Naive thymus-derived CD4-positive, alpha-beta T cell (primary cell): ENCODE measurements at regions of chr1 and their contacts with region 1.

Region 1: DNA sequence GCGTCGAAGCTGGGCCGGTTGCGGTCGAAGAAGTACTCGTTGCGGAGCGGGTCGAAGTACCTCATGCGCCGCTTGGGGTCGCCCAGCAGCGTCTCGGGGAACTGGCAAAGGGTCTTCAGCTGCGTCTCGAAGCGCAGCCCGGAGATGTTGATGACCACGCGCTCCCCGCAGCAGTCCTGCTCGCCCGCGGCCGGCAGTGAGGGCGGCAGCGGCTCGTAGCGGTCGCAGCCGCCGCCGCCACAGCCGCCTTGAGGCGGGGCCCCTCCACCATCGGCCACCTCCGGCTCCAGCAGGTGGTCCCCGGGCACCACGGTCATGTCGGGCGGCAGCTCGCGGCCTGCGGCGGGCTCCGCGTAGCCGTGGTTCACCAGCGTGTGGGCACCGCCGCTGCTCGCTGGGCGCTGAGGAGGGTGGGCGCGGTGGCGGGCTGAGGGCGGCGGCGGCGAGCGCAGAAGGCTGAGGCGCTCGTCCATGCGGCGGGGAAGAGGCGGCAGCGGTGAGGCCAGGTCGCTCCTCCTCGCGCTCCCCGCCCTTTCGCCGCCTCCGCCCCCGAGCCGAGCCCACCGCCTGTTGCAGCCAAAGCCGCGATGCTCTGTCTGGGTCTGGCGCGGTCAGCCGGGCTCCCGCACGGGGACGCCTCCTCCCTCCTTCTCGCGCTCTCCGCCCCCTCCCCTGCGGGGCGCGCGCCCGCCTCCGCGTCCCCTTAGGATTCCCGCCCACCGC is at the start of gene KCNA3:
- DNase-seq: peak; percentile 52 to 74 (median 63)
- ATAC-seq: peak; percentile 54
- H3K4me3 ChIP-seq: peak within 1 kb of the TSS; percentile 97
- H3K4me3 Mint-ChIP-seq: peak within 1 kb of the TSS; percentile 55 to 100 (median 99)
- H3K27ac ChIP-seq: peak within 1 kb of the TSS; percentile 88
- H3K27ac Mint-ChIP-seq: peak within 1 kb of the TSS; percentile 93 to 100 (median 100)
- H3K4me1 ChIP-seq: peaks cover 5% of the 10 kb centered on the region in 2 donors
- H3K4me1 Mint-ChIP-seq: peaks cover 27 to 60% (median 55%) of the 10 kb centered on the region in 7 donors
- H3K27me3 ChIP-seq: no peaks in the 10 kb centered on the region
- H3K27me3 Mint-ChIP-seq: peaks cover 0 to 2% (median 0%) of the 10 kb centered on the region in 5 donors
- total RNA-seq, gene KCNA3: 74.1 to 115 (median 108) TPM

Region 2: GRCh38 chr1:110460253-110461220 is 214.0 kb before region 1 on chr1:
- CTCF ChIA-PET with region 1: no interaction called
- POLR2A ChIA-PET with region 1: no interaction called
- intact Hi-C with region 1: no loop called
- DNase-seq: peak; percentile 66 to 91 (median 83)
- ATAC-seq: peak; percentile 96
- H3K4me3 ChIP-seq: no peak overlapping the region
- H3K4me3 Mint-ChIP-seq: no peak overlapping the region
- H3K27ac ChIP-seq: no peak overlapping the region
- H3K27ac Mint-ChIP-seq: no peak overlapping the region
- H3K4me1 ChIP-seq: no peaks in the 10 kb centered on the region
- H3K4me1 Mint-ChIP-seq: no peaks in the 10 kb centered on the region
- H3K27me3 ChIP-seq: no peaks in the 10 kb centered on the region
- H3K27me3 Mint-ChIP-seq: no peaks in the 10 kb centered on the region

Region 3: DNA sequence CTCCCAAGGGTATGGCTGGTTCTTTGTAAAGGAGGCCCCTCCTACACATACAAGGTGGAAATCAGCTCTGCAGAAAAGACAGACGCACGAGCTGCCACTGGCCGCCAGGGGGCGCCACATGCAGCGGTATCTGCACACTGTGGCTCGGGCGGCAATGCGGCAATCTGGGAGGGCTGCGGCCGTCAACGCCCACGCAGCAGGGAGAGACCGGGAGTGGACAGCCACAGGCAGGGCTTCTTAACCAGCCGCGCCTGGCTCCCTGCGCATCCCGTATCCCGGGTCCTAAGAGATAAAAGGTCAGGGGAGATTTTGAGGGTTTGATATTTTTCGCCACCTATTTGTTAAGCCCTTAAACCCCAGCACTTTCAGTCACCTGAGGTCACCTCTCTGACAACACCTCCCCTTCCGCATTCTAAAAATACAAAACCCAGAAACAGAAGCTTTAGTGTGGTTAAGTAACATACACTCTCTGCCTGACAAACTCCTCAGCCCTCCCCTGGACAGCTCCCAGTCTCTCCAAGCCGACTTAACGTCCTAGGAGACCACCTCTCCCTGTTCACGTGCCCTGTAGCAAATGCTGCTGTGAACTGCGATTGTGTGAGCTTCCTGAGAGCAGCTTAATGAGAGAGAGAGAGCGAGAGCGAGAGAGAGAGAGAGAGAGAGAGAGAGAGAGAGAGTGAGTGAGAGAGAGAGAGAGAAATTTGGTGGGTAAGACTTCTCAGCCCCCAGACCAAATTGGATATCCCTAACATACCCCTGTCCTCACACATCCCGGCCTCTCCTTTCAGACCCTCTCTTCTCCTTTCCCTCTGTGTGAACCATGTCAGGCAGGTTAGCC is 54.9 kb before region 1 on chr1:
- CTCF ChIA-PET with region 1: interaction called, 11 read pairs
- POLR2A ChIA-PET with region 1: interaction called, 29 read pairs
- intact Hi-C with region 1: loop called (anchors 1 kb)
- DNase-seq: peak; percentile 84 to 96 (median 92)
- ATAC-seq: peak; percentile 95
- H3K4me3 ChIP-seq: peak overlapping the region; percentile 58
- H3K4me3 Mint-ChIP-seq: peak overlapping the region; percentile 81 to 96 (median 90)
- H3K27ac ChIP-seq: peak overlapping the region; percentile 54
- H3K27ac Mint-ChIP-seq: peak overlapping the region; percentile 89 to 95 (median 93)
- H3K4me1 ChIP-seq: peaks cover 16 to 30% of the 10 kb centered on the region in 2 donors
- H3K4me1 Mint-ChIP-seq: peaks cover 32 to 54% (median 42%) of the 10 kb centered on the region in 7 donors
- H3K27me3 ChIP-seq: no peaks in the 10 kb centered on the region
- H3K27me3 Mint-ChIP-seq: peaks cover 0 to 4% (median 0%) of the 10 kb centered on the region in 5 donors

Region 4: DNA sequence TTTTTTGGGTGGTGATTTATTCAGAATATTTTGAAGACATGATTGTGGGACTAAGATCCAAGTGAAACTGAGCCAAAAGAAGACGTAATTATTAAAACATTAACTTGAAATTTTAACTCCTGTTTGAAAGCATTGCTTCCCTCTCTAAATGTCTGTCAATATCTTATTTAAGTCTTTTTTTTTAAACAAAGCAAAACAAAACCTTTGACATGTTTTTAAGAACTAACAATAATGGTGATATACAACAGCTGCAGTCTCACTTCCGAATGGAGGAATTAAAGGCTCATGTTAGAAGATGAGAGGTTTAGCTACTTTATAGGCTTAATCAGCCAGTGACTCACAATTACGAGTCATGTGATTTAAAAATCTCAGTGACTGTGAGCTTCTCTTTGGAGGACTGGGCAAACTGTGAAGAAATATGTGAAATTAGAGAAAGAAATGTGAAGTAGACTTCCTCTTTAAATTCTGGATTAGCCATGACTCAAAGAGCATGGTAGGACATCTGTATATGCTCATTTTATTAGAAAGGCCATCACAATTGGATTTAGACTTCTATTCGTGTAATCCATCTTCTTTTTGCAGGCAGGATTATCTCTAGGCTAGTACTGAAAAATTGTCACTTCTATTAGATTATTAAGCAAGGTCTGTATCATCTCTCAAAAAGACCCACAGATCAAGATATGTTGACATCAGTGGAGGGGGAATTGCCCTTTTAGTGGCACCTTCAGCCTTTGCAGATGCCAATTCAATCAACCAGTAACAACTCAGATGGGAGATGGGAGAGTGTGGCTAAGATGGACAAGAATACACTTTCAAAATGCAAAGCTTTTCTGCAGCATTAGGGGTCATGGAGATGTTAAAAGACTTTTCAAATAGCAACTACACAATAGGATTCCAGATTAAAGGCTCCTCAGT is 28.4 kb before region 1 on chr1:
- CTCF ChIA-PET with region 1: interaction called, 5 read pairs
- POLR2A ChIA-PET with region 1: interaction called, 108 read pairs
- intact Hi-C with region 1: loop called (anchors 1 kb)
- DNase-seq: no peak
- ATAC-seq: peak; percentile 60
- H3K4me3 ChIP-seq: peak overlapping the region; percentile 5
- H3K4me3 Mint-ChIP-seq: peak overlapping the region in 6 of 10 donors; percentile 22 to 55 (median 37)
- H3K27ac ChIP-seq: peak overlapping the region; percentile 48
- H3K27ac Mint-ChIP-seq: peak overlapping the region in 2 of 9 donors; percentile 75 to 87
- H3K4me1 ChIP-seq: peaks cover 83 to 92% of the 10 kb centered on the region in 2 donors
- H3K4me1 Mint-ChIP-seq: peaks cover 14 to 48% (median 42%) of the 10 kb centered on the region in 7 donors
- H3K27me3 ChIP-seq: no peaks in the 10 kb centered on the region
- H3K27me3 Mint-ChIP-seq: no peaks in the 10 kb centered on the region

Region 5: GRCh38 chr1:110686188-110686587 is 11.7 kb after region 1 on chr1:
- CTCF ChIA-PET with region 1: interaction called, 12 read pairs
- POLR2A ChIA-PET with region 1: interaction called, 14 read pairs
- intact Hi-C with region 1: loop called in 1 of 2 experiments (anchors 1 kb)
- DNase-seq: peak in 7 of 9 donors; percentile 15 to 47 (median 28)
- ATAC-seq: peak; percentile 62
- H3K4me3 ChIP-seq: no peak overlapping the region
- H3K4me3 Mint-ChIP-seq: no peak overlapping the region
- H3K27ac ChIP-seq: no peak overlapping the region
- H3K27ac Mint-ChIP-seq: peak overlapping the region in 4 of 9 donors; percentile 2 to 60 (median 44)
- H3K4me1 ChIP-seq: no peaks in the 10 kb centered on the region
- H3K4me1 Mint-ChIP-seq: peaks cover 0 to 11% (median 5%) of the 10 kb centered on the region in 7 donors
- H3K27me3 ChIP-seq: no peaks in the 10 kb centered on the region
- H3K27me3 Mint-ChIP-seq: peaks cover 0 to 13% (median 0%) of the 10 kb centered on the region in 5 donors

Region 6: GRCh38 chr1:110787328-110788071 is 113.0 kb after region 1 on chr1:
- CTCF ChIA-PET with region 1: interaction called, 3 read pairs
- POLR2A ChIA-PET with region 1: interaction called, 12 read pairs
- intact Hi-C with region 1: loop called in 1 of 2 experiments (anchors 5 kb)
- DNase-seq: peak in 7 of 9 donors; percentile 25 to 78 (median 61)
- ATAC-seq: peak; percentile 78
- H3K4me3 ChIP-seq: peak overlapping the region; percentile 40
- H3K4me3 Mint-ChIP-seq: peak overlapping the region; percentile 72 to 88 (median 80)
- H3K27ac ChIP-seq: peak overlapping the region; percentile 55
- H3K27ac Mint-ChIP-seq: peak overlapping the region; percentile 72 to 95 (median 87)
- H3K4me1 ChIP-seq: peaks cover 49 to 56% of the 10 kb centered on the region in 2 donors
- H3K4me1 Mint-ChIP-seq: peaks cover 43 to 78% (median 70%) of the 10 kb centered on the region in 7 donors
- H3K27me3 ChIP-seq: no peaks in the 10 kb centered on the region
- H3K27me3 Mint-ChIP-seq: peaks cover 0 to 14% (median 0%) of the 10 kb centered on the region in 5 donors

Region 7: DNA sequence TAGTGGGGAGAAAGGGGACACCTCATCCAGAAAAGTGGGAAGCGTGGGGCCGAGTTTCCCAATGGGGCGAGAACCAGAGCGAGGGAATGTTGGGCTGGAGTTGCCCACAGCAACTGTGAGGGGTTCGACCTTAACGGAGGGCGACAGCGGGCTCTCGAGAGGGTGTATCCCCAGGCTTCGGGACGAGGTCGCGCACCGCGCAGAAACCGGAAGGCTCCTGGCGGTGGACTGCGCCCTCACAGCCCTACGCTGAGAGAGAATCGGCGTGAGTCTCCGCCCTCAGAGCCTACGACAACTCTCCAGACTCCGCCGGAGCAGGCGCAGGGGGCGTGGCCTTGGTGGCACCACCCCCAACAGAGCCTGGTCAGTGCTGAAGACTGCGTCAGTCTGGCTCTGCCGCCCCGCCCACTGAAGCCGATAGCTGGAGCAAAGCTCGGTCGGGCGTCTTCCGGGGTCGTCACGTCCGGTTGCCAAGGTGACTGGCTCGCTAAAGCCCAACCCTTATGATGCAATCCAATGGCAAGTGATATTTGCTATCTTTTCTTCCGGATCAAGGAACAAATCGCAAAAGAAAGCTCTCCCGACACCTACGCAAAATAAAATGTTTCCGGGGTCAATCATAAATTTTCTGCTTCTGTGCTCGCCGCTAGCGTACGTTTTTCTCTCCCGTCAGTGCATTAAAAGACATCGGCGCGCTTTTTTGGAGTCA is 289.3 kb after region 1 on chr1 and contains the start of gene LRIF1:
- CTCF ChIA-PET with region 1: no interaction called
- POLR2A ChIA-PET with region 1: interaction called, 5 read pairs
- intact Hi-C with region 1: loop called in 1 of 2 experiments (anchors 1 kb)
- DNase-seq: peak; percentile 96 to 100 (median 100)
- ATAC-seq: peak; percentile 98
- H3K4me3 ChIP-seq: peak within 1 kb of the TSS; percentile 90
- H3K4me3 Mint-ChIP-seq: peak within 1 kb of the TSS; percentile 81 to 98 (median 93)
- H3K27ac ChIP-seq: peak within 1 kb of the TSS; percentile 89
- H3K27ac Mint-ChIP-seq: peak within 1 kb of the TSS; percentile 89 to 99 (median 97)
- H3K4me1 ChIP-seq: peaks cover 25% of the 10 kb centered on the region in 2 donors
- H3K4me1 Mint-ChIP-seq: peaks cover 29 to 50% (median 35%) of the 10 kb centered on the region in 7 donors
- H3K27me3 ChIP-seq: peaks cover 0 to under 1% of the 10 kb centered on the region in 2 donors
- H3K27me3 Mint-ChIP-seq: peaks cover 12 to 19% (median 15%) of the 10 kb centered on the region in 5 donors
- total RNA-seq, gene LRIF1: 7.9 to 25.8 (median 17.3) TPM

Region 8: DNA sequence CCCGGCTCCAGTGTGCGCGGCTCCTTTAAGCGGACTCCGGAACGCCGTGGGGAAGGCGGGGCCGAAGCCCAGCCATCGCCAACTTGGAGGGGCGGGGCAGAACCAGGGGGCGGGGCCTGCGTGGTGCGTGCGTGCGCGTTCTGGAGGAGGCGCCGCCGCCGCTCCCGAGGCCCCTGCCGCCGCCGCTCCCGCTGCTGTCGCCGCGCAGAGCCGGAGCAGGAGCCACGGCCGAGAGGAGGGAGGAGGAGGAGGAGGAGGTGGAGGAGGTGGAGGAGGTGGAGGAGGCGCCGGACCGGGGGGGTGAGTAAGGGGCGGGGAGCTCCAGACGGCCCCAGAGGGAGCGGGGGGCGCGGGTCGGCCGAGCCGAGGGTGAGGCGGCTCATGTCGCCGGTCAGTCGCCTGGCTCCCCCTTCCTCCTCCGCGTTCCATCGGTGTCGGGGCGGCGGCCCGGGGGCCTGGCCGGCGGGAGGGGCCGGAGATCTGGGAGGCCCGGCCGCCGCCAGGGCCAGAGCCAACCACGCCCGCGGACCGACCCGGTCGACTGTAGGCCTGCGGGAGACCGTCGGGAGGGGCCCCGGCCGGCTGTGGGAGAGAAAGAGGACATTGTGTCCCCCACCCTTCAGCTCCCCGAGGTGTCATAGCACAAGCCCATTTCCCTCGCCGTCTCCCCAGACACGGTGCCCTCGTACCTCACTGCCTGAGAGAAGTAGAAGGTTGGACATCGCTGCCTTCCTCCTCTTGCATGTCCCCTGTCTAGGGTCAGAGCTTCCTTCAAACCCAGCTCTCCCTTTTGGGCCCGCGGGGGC is 945.3 kb after region 1 on chr1 and contains the start of gene RAP1A:
- CTCF ChIA-PET with region 1: no interaction called
- POLR2A ChIA-PET with region 1: no interaction called
- intact Hi-C with region 1: loop called in 1 of 2 experiments (anchors 5 kb)
- DNase-seq: peak; percentile 80 to 95 (median 90)
- ATAC-seq: peak; percentile 93
- H3K4me3 ChIP-seq: peak within 1 kb of the TSS; percentile 88
- H3K4me3 Mint-ChIP-seq: peak within 1 kb of the TSS; percentile 93 to 99 (median 96)
- H3K27ac ChIP-seq: peak within 1 kb of the TSS; percentile 91
- H3K27ac Mint-ChIP-seq: peak within 1 kb of the TSS; percentile 86 to 98 (median 95)
- H3K4me1 ChIP-seq: peaks cover 46 to 64% of the 10 kb centered on the region in 2 donors
- H3K4me1 Mint-ChIP-seq: peaks cover 57 to 82% (median 76%) of the 10 kb centered on the region in 7 donors
- H3K27me3 ChIP-seq: no peaks in the 10 kb centered on the region
- H3K27me3 Mint-ChIP-seq: no peaks in the 10 kb centered on the region
- total RNA-seq, gene RAP1A: 89.8 to 183 (median 107) TPM